ENCODE measurements at regions of chr12 and their contacts with region 1.

Region 1: DNA sequence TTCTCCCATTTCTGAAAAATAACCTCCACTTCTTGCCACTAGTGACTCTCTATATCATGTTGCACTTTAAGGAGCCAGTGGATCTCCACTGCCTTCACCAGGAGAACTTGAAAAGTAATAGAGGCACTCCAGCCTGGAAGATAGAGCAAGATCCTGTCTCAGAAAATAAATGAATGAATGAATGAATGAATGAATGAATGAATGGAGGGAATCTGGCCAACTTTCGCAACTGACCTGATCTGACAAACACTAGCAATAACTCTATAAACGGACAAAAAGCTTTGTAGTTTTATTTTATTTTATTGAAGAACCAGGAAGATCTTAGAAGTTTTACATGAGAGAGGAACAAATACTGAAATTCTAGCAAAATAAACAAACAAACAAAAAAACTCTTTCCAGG is 109.7 kb upstream of the AVPR1A start:
- DNase-seq: no peak
- H3K4me3 ChIP-seq: no peak overlapping the region
- H3K27ac ChIP-seq: no peak overlapping the region
- H3K4me1 ChIP-seq: no peaks in the 10 kb centered on the region
- H3K27me3 ChIP-seq: no peaks in the 10 kb centered on the region
- CTCF ChIP-seq: no peak

Region 2: DNA sequence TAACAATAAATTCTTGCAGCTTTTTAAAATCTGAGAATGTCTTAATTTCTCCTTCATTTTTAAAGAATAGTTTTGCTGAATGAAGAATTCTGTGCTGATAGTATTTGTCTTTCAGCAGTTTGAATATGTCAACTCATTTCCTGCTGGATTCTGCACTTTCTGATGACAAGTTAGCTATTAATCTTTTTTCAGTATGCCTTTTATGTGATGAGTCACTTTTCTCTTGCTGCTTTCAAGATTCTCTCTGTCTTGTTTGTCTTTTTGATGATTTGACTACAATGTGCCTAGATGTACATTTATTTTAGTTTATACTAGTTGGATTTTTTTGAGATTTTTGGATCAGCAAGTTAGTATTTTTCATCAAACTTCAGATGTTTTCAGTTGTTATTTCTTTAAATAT is 21.8 kb before region 1 on chr12:
- CTCF ChIA-PET with region 1: no interaction called
- POLR2A ChIA-PET with region 1: no interaction called
- intact Hi-C with region 1: no loop called
- DNase-seq: no peak
- H3K4me3 ChIP-seq: no peak overlapping the region
- H3K27ac ChIP-seq: no peak overlapping the region
- H3K4me1 ChIP-seq: no peaks in the 10 kb centered on the region
- H3K27me3 ChIP-seq: peaks cover 3% of the 10 kb centered on the region; the same call in 1 of the 2 replicates
- CTCF ChIP-seq: no peak

Region 3: GRCh38 chr12:63302941-63303536 is 42.3 kb after region 1 on chr12:
- CTCF ChIA-PET with region 1: no interaction called
- POLR2A ChIA-PET with region 1: no interaction called
- intact Hi-C with region 1: loop called (anchors 1 kb)
- DNase-seq: no peak
- H3K4me3 ChIP-seq: no peak overlapping the region
- H3K27ac ChIP-seq: no peak overlapping the region
- H3K4me1 ChIP-seq: no peaks in the 10 kb centered on the region
- H3K27me3 ChIP-seq: no peaks in the 10 kb centered on the region
- CTCF ChIP-seq: no peak

Region 4: DNA sequence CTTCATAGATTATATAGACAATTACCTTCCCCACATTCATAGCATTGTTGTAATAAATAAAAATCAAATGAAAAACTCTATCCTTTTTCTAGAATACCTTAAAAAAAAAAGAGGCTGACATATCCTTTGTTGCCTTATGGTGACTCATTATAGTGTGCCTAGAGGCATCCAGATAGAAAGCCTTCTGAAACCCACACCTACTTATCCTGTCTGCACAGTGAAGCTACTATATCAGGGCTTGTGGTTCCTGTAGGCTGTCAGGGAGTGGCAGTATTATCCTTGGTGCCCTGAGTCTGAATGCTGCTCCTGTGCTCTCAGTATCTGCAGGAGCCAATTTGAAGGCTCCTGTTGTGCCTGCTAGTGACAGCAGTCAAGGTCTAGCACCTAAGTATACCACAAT is 58.6 kb after region 1 on chr12:
- CTCF ChIA-PET with region 1: no interaction called
- POLR2A ChIA-PET with region 1: no interaction called
- intact Hi-C with region 1: no loop called
- DNase-seq: peak in 1 of 2 experiments; percentile 43
- H3K4me3 ChIP-seq: no peak overlapping the region
- H3K27ac ChIP-seq: no peak overlapping the region
- H3K4me1 ChIP-seq: no peaks in the 10 kb centered on the region
- H3K27me3 ChIP-seq: no peaks in the 10 kb centered on the region
- CTCF ChIP-seq: no peak

Measured in PC-9 (cell line).